ENCODE measurements at regions of chr6 and their contacts with region 1.

Region 1: DNA sequence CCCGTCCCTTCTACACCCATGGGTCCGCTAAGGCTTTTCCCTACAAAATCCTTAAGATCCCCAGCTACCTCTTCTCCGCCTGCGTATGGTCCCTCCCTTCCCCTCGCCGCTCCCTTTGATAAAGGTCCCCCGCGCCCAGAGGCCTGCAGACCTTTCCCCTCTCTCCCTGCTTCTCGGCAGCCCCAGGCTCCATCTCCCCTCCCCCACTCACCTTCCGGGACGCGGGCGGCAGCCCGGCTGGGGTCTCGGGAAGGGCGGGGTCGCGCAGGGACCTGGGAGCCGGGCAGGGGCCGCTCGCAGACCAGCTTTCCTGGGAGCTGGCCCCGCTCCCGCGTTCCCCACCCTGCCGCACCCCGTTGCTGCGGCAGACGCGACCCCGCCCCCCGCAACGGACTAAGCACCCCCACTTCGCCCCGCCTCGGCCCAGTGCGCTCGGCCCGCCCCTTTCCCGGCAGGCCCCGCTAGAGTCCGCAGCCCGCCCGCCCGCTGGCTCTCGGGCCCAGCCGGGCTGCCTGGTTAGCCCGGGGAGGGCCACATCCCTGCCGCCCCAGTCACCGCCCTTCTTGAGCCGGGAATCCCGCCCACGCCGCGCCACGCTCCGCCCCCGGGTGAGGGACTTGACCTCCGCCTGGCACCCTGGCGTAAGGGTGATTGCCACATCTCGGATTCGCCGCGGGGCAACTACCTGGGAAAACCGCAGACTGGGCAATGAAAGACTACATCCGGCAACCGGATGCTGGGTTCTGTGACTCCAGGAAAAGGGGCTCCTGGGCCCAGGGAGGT is at the start of gene FLOT1:
- DNase-seq: peak; percentile 96
- CTCF ChIP-seq: no peak

Region 2: GRCh38 chr6:30814136-30815040 is 71.9 kb after region 1 on chr6:
- in situ Hi-C with region 1: loop called (anchors 10 kb)
- DNase-seq: no peak
- CTCF ChIP-seq: no peak

Measured in GM13977 (cell line).